CD8-positive, alpha-beta T cell (primary cell): ENCODE measurements at regions of chr16 and their contacts with region 1.

Region 1: DNA sequence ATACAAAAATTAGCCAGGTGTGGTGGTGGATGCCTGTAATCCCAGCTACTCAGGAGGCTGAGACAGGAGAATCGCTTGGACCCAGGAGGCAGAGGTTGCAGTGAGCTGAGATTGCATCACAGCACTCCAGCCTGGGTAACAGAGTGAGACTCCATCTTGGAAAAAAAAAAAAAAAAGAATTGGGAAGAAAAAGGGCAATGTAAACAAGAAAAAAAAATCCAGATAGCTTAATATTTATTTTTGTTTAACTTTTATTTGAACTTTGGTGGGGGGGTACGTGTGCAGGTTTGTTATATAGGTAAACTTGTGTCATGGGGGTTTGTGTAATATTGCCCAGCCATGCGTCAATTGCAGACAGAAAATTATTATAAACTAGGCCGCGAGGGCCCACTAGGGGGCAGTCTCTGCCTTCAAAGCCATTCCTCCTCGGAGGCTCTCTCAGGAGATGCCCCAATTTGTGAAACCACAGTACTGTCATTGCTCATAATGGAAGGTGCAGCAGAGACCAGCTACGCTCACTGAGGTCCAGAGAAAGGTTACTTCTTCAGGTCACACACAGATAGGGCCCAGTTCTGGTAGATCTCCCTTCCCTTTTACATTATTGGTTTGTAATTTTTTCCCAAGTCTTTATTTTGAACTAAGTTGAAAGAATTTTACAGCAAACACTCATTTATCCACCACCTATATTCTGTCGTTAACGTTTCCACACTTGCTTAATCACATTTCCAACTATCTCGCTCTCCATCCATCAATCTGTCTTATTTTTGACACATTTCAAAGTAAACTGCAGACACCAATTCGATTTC is 206.2 kb downstream of the PRKCB start:
- DNase-seq: peak; percentile 53 to 84 (median 78)
- ATAC-seq: peak; percentile 79
- H3K4me3 ChIP-seq: no peak overlapping the region
- H3K4me3 Mint-ChIP-seq: no peak overlapping the region
- H3K27ac ChIP-seq: no peak overlapping the region
- H3K27ac Mint-ChIP-seq: no peak overlapping the region
- H3K4me1 ChIP-seq: no peaks in the 10 kb centered on the region
- H3K4me1 Mint-ChIP-seq: peaks cover 9% of the 10 kb centered on the region
- H3K27me3 ChIP-seq: no peaks in the 10 kb centered on the region
- H3K27me3 Mint-ChIP-seq: no peaks in the 10 kb centered on the region
- CTCF ChIP-seq: peak; percentile 67

Region 2: DNA sequence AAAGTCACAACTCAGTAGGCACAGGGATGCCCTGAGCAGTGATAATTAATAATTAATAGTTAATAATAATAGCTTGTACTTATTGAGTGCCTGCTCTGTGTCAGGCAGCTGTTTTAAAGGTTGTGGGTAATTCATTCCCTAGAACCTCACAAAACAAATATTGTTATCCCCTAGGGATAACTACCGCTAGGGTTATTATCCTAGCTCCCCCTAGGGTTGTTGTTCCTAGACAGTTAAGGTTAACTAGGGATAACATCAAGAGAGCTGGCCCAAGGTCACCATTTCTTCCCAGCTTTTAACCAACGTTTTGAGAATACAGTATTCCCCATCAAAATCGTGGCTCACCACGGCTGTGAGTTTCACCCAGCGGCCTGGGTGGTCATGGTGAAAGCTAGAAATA is 26.1 kb before region 1 on chr16:
- CTCF ChIA-PET with region 1: interaction called, 52 read pairs
- POLR2A ChIA-PET with region 1: interaction called, 3 read pairs
- intact Hi-C with region 1: no loop called
- DNase-seq: no peak
- ATAC-seq: no peak
- H3K4me3 ChIP-seq: no peak overlapping the region
- H3K4me3 Mint-ChIP-seq: no peak overlapping the region
- H3K27ac ChIP-seq: peak overlapping the region in 1 of 2 experiments; percentile 77
- H3K27ac Mint-ChIP-seq: peak overlapping the region; percentile 84
- H3K4me1 ChIP-seq: peaks cover 60% of the 10 kb centered on the region
- H3K4me1 Mint-ChIP-seq: peaks cover 59% of the 10 kb centered on the region
- H3K27me3 ChIP-seq: no peaks in the 10 kb centered on the region
- H3K27me3 Mint-ChIP-seq: no peaks in the 10 kb centered on the region
- CTCF ChIP-seq: no peak

Region 3: GRCh38 chr16:24054741-24055491 is 12.9 kb after region 1 on chr16:
- CTCF ChIA-PET with region 1: interaction called, 16 read pairs
- POLR2A ChIA-PET with region 1: no interaction called
- intact Hi-C with region 1: no loop called
- DNase-seq: no peak
- ATAC-seq: no peak
- H3K4me3 ChIP-seq: no peak overlapping the region
- H3K4me3 Mint-ChIP-seq: no peak overlapping the region
- H3K27ac ChIP-seq: no peak overlapping the region
- H3K27ac Mint-ChIP-seq: no peak overlapping the region
- H3K4me1 ChIP-seq: no peaks in the 10 kb centered on the region
- H3K4me1 Mint-ChIP-seq: peaks cover 36% of the 10 kb centered on the region
- H3K27me3 ChIP-seq: no peaks in the 10 kb centered on the region
- H3K27me3 Mint-ChIP-seq: no peaks in the 10 kb centered on the region
- CTCF ChIP-seq: no peak

Region 4: DNA sequence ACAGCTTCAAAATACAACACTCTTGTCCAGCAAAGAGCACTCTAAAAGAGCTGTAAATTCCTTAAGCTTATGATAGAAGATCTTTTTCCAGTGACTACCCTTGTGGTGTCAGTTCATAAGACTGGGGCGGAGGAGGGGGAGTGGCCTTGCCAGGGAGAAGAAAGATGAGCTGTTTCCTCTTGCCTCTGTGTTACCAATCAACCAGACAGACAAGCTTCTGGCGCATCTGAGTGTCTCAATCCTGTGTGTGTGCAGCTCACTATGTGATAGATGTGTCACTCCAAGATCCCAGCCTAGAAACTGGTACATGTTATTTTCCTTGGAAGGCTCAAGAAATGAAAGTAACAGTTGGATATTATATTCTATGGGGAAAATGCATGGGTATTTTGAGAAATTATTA is 46.7 kb after region 1 on chr16:
- CTCF ChIA-PET with region 1: no interaction called
- POLR2A ChIA-PET with region 1: no interaction called
- intact Hi-C with region 1: no loop called
- DNase-seq: no peak
- ATAC-seq: no peak
- H3K4me3 ChIP-seq: no peak overlapping the region
- H3K4me3 Mint-ChIP-seq: no peak overlapping the region
- H3K27ac ChIP-seq: no peak overlapping the region
- H3K27ac Mint-ChIP-seq: no peak overlapping the region
- H3K4me1 ChIP-seq: no peaks in the 10 kb centered on the region
- H3K4me1 Mint-ChIP-seq: peaks cover 13% of the 10 kb centered on the region
- H3K27me3 ChIP-seq: no peaks in the 10 kb centered on the region
- H3K27me3 Mint-ChIP-seq: no peaks in the 10 kb centered on the region
- CTCF ChIP-seq: no peak

Region 5: GRCh38 chr16:24180451-24180850 is 138.4 kb after region 1 on chr16:
- CTCF ChIA-PET with region 1: no interaction called
- POLR2A ChIA-PET with region 1: no interaction called
- intact Hi-C with region 1: loop called in 1 of 2 experiments (anchors 5 kb)
- DNase-seq: no peak
- ATAC-seq: no peak
- H3K4me3 ChIP-seq: no peak overlapping the region
- H3K4me3 Mint-ChIP-seq: no peak overlapping the region
- H3K27ac ChIP-seq: no peak overlapping the region
- H3K27ac Mint-ChIP-seq: no peak overlapping the region
- H3K4me1 ChIP-seq: no peaks in the 10 kb centered on the region
- H3K4me1 Mint-ChIP-seq: no peaks in the 10 kb centered on the region
- H3K27me3 ChIP-seq: no peaks in the 10 kb centered on the region
- H3K27me3 Mint-ChIP-seq: no peaks in the 10 kb centered on the region
- CTCF ChIP-seq: no peak

Region 6: GRCh38 chr16:24253192-24253591 is 211.2 kb after region 1 on chr16:
- CTCF ChIA-PET with region 1: interaction called, 61 read pairs
- POLR2A ChIA-PET with region 1: no interaction called
- intact Hi-C with region 1: loop called in 1 of 2 experiments (anchors 1 kb)
- DNase-seq: peak in 8 of 9 experiments; percentile 3 to 69 (median 31)
- ATAC-seq: peak; percentile 56
- H3K4me3 ChIP-seq: no peak overlapping the region
- H3K4me3 Mint-ChIP-seq: no peak overlapping the region
- H3K27ac ChIP-seq: no peak overlapping the region
- H3K27ac Mint-ChIP-seq: no peak overlapping the region
- H3K4me1 ChIP-seq: no peaks in the 10 kb centered on the region
- H3K4me1 Mint-ChIP-seq: no peaks in the 10 kb centered on the region
- H3K27me3 ChIP-seq: peaks cover 15 to 20% of the 10 kb centered on the region in 2 experiments
- H3K27me3 Mint-ChIP-seq: peaks cover 43% of the 10 kb centered on the region
- CTCF ChIP-seq: peak; percentile 72

Region 7: DNA sequence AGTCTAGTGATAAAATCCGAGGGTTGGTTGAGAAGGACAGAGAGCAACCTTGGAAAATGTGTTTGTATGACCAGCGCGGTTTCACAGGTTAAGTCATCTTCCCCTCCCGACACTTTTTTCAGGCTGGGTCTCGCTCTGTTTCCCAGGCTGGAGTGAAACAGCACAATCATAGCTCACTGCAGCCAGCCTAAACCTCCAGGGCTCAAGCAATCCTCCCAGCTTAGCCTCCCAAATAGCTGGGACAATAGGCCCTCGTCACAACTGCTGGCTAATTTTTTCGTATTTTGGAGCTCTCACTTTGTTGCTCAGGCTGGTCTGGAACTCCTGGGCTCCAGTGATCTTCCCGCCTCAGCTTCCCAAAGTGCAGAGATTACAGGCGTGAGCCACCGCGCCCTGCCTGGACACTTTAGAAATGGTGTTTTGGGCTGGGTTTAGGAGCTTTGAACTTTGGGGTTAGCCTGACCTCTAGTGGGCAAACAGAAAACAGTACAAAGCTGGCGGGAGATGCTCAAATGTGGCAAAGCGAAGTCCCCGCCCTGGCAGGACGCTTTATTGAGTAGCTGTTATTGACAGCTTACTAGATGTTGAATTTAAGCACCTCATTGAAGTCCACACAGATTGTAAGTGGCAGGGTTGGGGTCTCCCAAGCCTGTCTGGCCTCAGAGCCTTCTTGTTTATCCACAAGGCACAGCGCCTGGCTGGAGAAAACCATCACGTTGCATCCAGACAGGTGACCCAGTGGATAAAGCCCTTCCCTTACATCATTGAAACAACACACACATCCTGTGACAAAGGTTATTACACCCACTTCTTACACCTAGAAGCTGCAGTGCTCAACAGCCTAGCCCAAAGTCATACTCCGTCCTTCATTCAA is 462.7 kb after region 1 on chr16:
- CTCF ChIA-PET with region 1: interaction called, 24 read pairs
- POLR2A ChIA-PET with region 1: no interaction called
- intact Hi-C with region 1: loop called in 1 of 2 experiments (anchors 1 kb)
- DNase-seq: peak; percentile 17 to 77 (median 44)
- ATAC-seq: peak; percentile 71
- H3K4me3 ChIP-seq: no peak overlapping the region
- H3K4me3 Mint-ChIP-seq: no peak overlapping the region
- H3K27ac ChIP-seq: no peak overlapping the region
- H3K27ac Mint-ChIP-seq: no peak overlapping the region
- H3K4me1 ChIP-seq: no peaks in the 10 kb centered on the region
- H3K4me1 Mint-ChIP-seq: no peaks in the 10 kb centered on the region
- H3K27me3 ChIP-seq: peaks cover 0 to 2% of the 10 kb centered on the region in 2 experiments
- H3K27me3 Mint-ChIP-seq: peaks cover 25% of the 10 kb centered on the region
- CTCF ChIP-seq: peak; percentile 74

Region 8: GRCh38 chr16:24516900-24517669 is 475.1 kb after region 1 on chr16:
- CTCF ChIA-PET with region 1: no interaction called
- POLR2A ChIA-PET with region 1: no interaction called
- intact Hi-C with region 1: loop called in 1 of 2 experiments (anchors 5 kb)
- DNase-seq: peak; percentile 42 to 83 (median 77)
- ATAC-seq: peak; percentile 81
- H3K4me3 ChIP-seq: no peak overlapping the region
- H3K4me3 Mint-ChIP-seq: no peak overlapping the region
- H3K27ac ChIP-seq: no peak overlapping the region
- H3K27ac Mint-ChIP-seq: no peak overlapping the region
- H3K4me1 ChIP-seq: no peaks in the 10 kb centered on the region
- H3K4me1 Mint-ChIP-seq: peaks cover 4% of the 10 kb centered on the region
- H3K27me3 ChIP-seq: no peaks in the 10 kb centered on the region
- H3K27me3 Mint-ChIP-seq: peaks cover 6% of the 10 kb centered on the region
- CTCF ChIP-seq: peak; percentile 93